Common myeloid progenitor, CD34-positive (primary cell): ENCODE measurements at regions of chr7 and their contacts with region 1.

Region 1: DNA sequence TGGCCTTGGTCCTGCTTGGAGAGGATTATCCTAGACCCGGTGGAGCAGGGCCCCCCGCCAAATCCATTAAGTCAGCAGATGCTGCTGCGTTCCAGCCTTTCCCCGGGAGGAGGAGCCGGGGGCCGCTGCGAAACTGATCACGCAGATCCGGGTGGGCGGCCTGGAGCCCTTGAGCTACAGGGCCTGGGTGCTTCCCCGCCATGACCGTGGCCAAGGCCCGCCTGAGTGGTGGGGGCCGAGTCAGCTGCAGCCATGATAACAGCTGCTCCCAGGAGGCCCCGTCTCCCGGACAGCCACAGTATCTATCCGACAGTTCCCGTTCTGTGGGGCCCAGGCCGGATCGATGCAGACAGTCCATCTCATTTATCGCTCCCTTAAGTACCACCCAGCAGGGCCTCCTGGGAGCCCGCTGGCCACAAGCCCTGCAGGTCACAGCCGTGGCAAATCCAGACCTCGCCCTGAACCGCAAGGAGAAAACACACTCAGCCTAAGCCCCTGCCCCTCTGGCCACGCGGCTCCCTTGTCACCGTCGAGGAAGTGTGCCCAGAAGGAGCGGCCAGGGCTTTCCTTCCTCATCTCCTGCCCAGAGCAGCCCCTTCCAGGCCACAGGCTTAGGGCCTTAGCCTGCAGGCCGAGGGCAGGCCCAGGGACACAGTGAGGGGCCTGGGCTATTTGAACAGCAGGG is 34.4 kb upstream of the SLC29A4 start:
- DNase-seq: no peak
- H3K4me3 ChIP-seq: no peak overlapping the region
- H3K27ac ChIP-seq: no peak overlapping the region
- H3K4me1 ChIP-seq: no peaks in the 10 kb centered on the region
- H3K27me3 ChIP-seq: no peaks in the 10 kb centered on the region

Region 2: GRCh38 chr7:5237286-5237685 is 11.1 kb before region 1 on chr7:
- CTCF ChIA-PET with region 1: interaction called, 12 read pairs
- POLR2A ChIA-PET with region 1: no interaction called
- DNase-seq: peak in 2 of 3 donors; percentile 35 to 56
- H3K4me3 ChIP-seq: peak overlapping the region in 2 of 7 experiments; percentile 14 to 47
- H3K27ac ChIP-seq: no peak overlapping the region
- H3K4me1 ChIP-seq: peaks cover 0 to 36% (median 30%) of the 10 kb centered on the region in 4 experiments
- H3K27me3 ChIP-seq: peaks cover 0 to 6% (median 0%) of the 10 kb centered on the region in 5 experiments

Region 3: GRCh38 chr7:5780801-5781496 is 532.6 kb after region 1 on chr7:
- CTCF ChIA-PET with region 1: no interaction called
- POLR2A ChIA-PET with region 1: no interaction called
- DNase-seq: peak in 2 of 3 donors; percentile 12 to 36
- H3K4me3 ChIP-seq: peak overlapping the region; percentile 48 to 82 (median 74)
- H3K27ac ChIP-seq: peak overlapping the region; percentile 15 to 79
- H3K4me1 ChIP-seq: peaks cover 0 to 22% (median 7%) of the 10 kb centered on the region in 4 experiments
- H3K27me3 ChIP-seq: no peaks in the 10 kb centered on the region